Dendritic cell treated with granulocyte-macrophage colony-stimulating factor and Interleukin-4, amounts not matched to agents 40 ng/mL and 50 ng/mL, for 4 days (primary cell): ENCODE measurements at regions of chr4 and their contacts with region 1.

Region 1: GRCh38 chr4:84258905-84259830 is 239.9 kb downstream of the NKX6-1 start:
- H3K4me3 Mint-ChIP-seq: no peak overlapping the region
- H3K27ac Mint-ChIP-seq: no peak overlapping the region
- H3K4me1 Mint-ChIP-seq: no peaks in the 10 kb centered on the region
- H3K27me3 Mint-ChIP-seq: no peaks in the 10 kb centered on the region

Region 2: GRCh38 chr4:83510442-83510841 is 748.7 kb before region 1 on chr4:
- intact Hi-C with region 1: loop called (anchors 5 kb)
- H3K4me3 Mint-ChIP-seq: no peak overlapping the region
- H3K27ac Mint-ChIP-seq: no peak overlapping the region
- H3K4me1 Mint-ChIP-seq: peaks cover 15% of the 10 kb centered on the region
- H3K27me3 Mint-ChIP-seq: no peaks in the 10 kb centered on the region

Region 3: GRCh38 chr4:85260064-85260463 is 1000.9 kb after region 1 on chr4:
- intact Hi-C with region 1: no loop called
- H3K4me3 Mint-ChIP-seq: no peak overlapping the region
- H3K27ac Mint-ChIP-seq: no peak overlapping the region
- H3K4me1 Mint-ChIP-seq: no peaks in the 10 kb centered on the region
- H3K27me3 Mint-ChIP-seq: no peaks in the 10 kb centered on the region